ENCODE measurements at regions of chr3 and their contacts with region 1.

Region 1: GRCh38 chr3:171772427-171773056 is 37.7 kb downstream of the PLD1 start:
- H3K4me3 Mint-ChIP-seq: no peak overlapping the region
- H3K27ac Mint-ChIP-seq: no peak overlapping the region
- H3K4me1 Mint-ChIP-seq: peaks cover 33% of the 10 kb centered on the region
- H3K27me3 Mint-ChIP-seq: no peaks in the 10 kb centered on the region

Region 2: DNA sequence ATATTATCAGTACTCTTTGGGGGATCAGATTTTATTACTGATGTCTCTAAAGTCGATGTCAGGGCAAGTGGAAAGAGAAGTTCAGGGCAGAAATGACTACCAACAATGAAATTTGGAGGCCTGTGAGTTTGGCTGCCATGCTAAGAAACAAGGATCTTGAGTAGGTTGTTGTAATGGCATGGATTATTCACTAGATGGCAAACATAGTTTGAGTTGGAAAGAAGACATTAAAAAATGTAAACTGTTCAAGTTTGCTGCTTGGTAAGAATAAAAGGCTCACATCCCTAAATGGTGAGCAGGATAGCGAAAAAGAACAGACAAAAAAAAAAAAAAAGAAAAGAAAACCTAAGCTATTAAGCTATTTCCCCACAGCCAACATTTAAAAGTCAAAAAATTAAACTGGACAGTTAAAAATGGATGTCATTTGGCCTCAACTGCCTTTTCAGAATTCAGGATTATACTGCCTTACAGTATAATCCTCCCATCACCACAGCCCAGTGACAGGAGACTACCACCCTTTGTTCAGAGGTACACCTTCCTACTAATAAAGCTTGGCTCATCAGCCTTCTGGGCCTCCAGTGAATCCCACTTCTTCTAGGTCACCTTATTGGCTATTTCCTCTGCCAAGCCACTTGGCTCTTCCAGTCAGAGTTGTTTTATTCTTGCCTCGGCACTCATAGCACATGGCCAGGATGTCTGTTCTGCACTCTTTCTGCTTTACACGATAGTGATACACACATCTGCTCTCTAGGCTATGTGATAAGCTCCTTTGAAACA is 126.0 kb before region 1 on chr3:
- intact Hi-C with region 1: loop called (anchors 2 kb)
- H3K4me3 Mint-ChIP-seq: no peak overlapping the region
- H3K27ac Mint-ChIP-seq: no peak overlapping the region
- H3K4me1 Mint-ChIP-seq: peaks cover 24% of the 10 kb centered on the region
- H3K27me3 Mint-ChIP-seq: no peaks in the 10 kb centered on the region

Region 3: GRCh38 chr3:171703756-171704401 is 68.7 kb before region 1 on chr3:
- intact Hi-C with region 1: loop called (anchors 5 kb)
- H3K4me3 Mint-ChIP-seq: no peak overlapping the region
- H3K27ac Mint-ChIP-seq: no peak overlapping the region
- H3K4me1 Mint-ChIP-seq: no peaks in the 10 kb centered on the region
- H3K27me3 Mint-ChIP-seq: no peaks in the 10 kb centered on the region

Region 4: DNA sequence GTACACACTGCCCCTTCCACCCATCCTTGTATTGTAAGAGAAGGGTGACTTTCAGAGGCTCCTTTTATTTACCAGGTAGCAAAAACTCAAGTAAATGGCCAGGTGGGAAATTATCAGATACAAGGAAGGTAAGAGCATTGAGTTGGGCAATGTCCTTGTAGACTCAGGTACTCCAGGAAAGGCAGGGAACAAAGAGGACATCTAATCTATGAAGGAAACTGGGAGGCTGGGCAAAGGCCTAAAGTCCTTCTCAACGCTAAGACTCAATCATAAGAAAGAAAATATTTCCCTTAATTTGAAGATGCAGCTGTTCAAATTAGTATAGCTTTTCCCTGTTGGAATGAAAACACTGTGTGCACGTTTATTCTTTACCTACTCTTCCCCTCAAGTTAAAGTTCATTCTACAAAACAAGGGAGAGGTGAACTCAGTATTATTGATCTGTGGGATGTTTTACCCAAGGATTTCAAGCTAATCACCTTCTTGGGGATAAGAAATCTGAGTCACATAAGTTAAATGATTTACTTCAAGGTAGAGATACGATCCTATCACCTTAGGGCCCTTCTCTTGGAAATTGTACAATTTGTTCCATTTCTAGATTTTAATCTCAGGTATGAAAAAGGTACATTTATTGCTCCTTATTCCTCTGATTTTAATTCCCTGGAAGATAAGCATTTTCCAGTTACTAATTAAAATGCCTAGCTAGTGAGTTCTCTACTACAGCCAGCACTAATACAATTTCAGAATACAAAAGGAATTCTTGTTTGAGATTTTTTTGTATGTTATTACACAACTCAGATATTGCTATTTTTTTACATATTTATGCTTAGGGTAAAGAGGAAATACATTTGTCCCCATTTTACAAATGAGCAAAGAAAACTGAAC is 42.8 kb before region 1 on chr3:
- intact Hi-C with region 1: no loop called
- H3K4me3 Mint-ChIP-seq: no peak overlapping the region
- H3K27ac Mint-ChIP-seq: no peak overlapping the region
- H3K4me1 Mint-ChIP-seq: no peaks in the 10 kb centered on the region
- H3K27me3 Mint-ChIP-seq: no peaks in the 10 kb centered on the region

Region 5: GRCh38 chr3:171753665-171754408 is 18.7 kb before region 1 on chr3:
- intact Hi-C with region 1: no loop called
- H3K4me3 Mint-ChIP-seq: no peak overlapping the region
- H3K27ac Mint-ChIP-seq: no peak overlapping the region
- H3K4me1 Mint-ChIP-seq: peaks cover 12% of the 10 kb centered on the region
- H3K27me3 Mint-ChIP-seq: no peaks in the 10 kb centered on the region

Measured in dendritic cell treated with granulocyte-macrophage colony-stimulating factor and Interleukin-4, amounts not matched to agents 40 ng/mL and 50 ng/mL, for 4 days (primary cell).